GM12878 (cell line): ENCODE measurements at regions of chr3 and their contacts with region 1.

Region 1: GRCh38 chr3:4978204-4978965 is 852 bp upstream of the BHLHE40 start:
- DNase-seq: peak; percentile 78
- ATAC-seq: peak; percentile 52
- H3K4me3 ChIP-seq: peak overlapping the region; percentile 72
- H3K27ac ChIP-seq: peak overlapping the region; percentile 84
- H3K4me1 ChIP-seq: peaks cover 27% of the 10 kb centered on the region
- H3K27me3 ChIP-seq: no peaks in the 10 kb centered on the region
- CTCF ChIP-seq: no peak
- EP300 ChIP-seq: peak; percentile 60 to 80; a peak in 3 of 4 replicates
- POLR2A ChIP-seq: peak; percentile 89
- RAD21 ChIP-seq: 0 out of 2 replicates have a peak, but pooled peaks have one; percentile 5

Region 2: DNA sequence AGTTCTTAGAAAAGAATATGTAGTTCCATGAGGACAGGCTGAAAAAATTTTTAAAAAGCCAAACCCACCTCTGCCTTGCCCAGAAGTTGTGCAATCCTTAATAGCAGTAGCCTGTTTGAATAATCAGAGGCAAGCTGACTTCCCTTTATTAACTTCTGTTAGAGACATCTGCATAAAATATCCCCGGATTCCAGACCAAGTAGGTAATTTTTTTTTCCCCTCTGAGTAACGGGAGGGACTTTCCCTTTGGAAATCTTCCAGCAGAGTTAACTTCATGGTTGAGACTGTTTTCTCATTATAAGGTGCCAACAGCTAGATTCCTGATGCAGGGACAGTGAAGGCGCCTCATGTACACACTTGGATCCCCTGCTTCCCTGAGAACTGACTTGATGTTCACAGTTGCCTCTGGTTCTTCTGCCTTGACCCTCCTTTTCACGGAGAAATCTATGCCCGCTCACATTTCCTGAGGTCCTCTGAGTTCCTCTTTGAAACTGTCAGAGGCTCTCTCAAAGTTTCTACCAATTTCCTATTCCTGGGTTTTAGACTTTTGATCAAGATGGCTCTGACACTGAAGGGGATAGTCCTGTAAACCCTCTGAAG is 226.8 kb before region 1 on chr3:
- CTCF ChIA-PET with region 1: interaction called, 35 read pairs
- POLR2A ChIA-PET with region 1: interaction called, 230 read pairs
- RAD21 ChIA-PET with region 1: interaction called, 342 read pairs
- SMC1A ChIA-PET with region 1: interaction called, 122 read pairs
- in situ Hi-C with region 1: loop called (anchors 5 kb)
- intact Hi-C with region 1: loop called (anchors 1 kb)
- DNase-seq: no peak
- ATAC-seq: peak; percentile 3
- H3K4me3 ChIP-seq: peak overlapping the region; percentile 65
- H3K27ac ChIP-seq: peak overlapping the region; percentile 95
- H3K4me1 ChIP-seq: peaks cover 71% of the 10 kb centered on the region
- H3K27me3 ChIP-seq: no peaks in the 10 kb centered on the region
- CTCF ChIP-seq: no peak
- EP300 ChIP-seq: peak in 1 of 2 experiments; percentile 4; a peak in 1 of 4 replicates
- POLR2A ChIP-seq: no peak
- RAD21 ChIP-seq: no peak

Region 3: DNA sequence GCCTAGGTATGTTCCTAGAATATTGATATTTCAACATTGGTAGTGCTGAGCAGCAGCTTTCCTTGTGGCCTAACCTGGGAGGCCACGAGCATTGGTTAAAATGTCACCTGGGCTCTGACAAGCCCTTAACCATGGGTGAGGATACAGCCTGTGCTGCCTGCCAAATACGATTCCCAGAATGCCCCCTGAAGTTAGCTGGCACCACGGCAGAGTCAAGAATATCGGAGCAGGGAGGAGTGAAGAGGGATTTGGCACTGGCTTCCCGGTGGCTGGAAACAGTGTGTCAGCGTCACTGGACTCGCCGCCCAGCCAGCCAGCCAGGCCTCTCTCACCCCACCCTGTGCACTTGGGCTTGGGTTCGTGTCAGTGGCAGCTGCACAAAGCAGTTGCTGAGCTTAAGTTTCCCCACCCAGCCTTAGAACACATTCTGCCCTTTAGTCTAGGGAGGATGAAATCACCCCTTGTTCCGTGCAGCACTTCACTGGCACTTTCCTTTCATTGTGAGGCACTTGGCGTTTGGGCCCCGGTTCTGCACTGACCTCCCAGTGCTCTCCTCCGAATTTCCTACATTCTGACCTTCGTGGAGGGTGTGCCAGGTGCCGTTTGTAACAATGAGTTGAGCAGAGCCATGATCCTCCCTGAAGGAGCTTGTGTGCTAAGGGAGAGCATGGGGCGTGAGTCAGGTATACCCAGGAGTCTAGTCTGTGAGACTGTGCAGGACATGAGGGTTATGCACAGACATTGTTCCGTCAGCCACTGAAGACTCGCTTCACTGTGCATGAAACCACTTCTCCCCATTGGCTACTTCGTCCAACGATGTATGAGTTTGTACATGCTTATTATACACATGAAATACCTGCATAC is 151.9 kb before region 1 on chr3:
- CTCF ChIA-PET with region 1: interaction called, 35 read pairs
- POLR2A ChIA-PET with region 1: interaction called, 6 read pairs
- RAD21 ChIA-PET with region 1: interaction called, 325 read pairs
- SMC1A ChIA-PET with region 1: interaction called, 129 read pairs
- in situ Hi-C with region 1: no loop called
- intact Hi-C with region 1: loop called (anchors 1 kb)
- DNase-seq: no peak
- ATAC-seq: peak; percentile 9
- H3K4me3 ChIP-seq: no peak overlapping the region
- H3K27ac ChIP-seq: no peak overlapping the region
- H3K4me1 ChIP-seq: peaks cover 21% of the 10 kb centered on the region
- H3K27me3 ChIP-seq: no peaks in the 10 kb centered on the region
- CTCF ChIP-seq: no peak
- EP300 ChIP-seq: no peak
- POLR2A ChIP-seq: peak; percentile 31; the same call in 1 of the 2 replicates
- RAD21 ChIP-seq: no peak

Region 4: GRCh38 chr3:4898454-4899313 is 79.7 kb before region 1 on chr3:
- CTCF ChIA-PET with region 1: interaction called, 15 read pairs
- POLR2A ChIA-PET with region 1: interaction called, 3 read pairs
- RAD21 ChIA-PET with region 1: interaction called, 7 read pairs
- SMC1A ChIA-PET with region 1: interaction called, 12 read pairs
- in situ Hi-C with region 1: no loop called
- intact Hi-C with region 1: loop called (anchors 2 kb)
- DNase-seq: peak; percentile 53
- ATAC-seq: peak; percentile 97
- H3K4me3 ChIP-seq: no peak overlapping the region; the same call in 1 of the 2 replicates
- H3K27ac ChIP-seq: peak overlapping the region; percentile 28
- H3K4me1 ChIP-seq: peaks cover 16% of the 10 kb centered on the region
- H3K27me3 ChIP-seq: no peaks in the 10 kb centered on the region
- CTCF ChIP-seq: no peak
- EP300 ChIP-seq: peak; percentile 69 to 91; a peak in 3 of 4 replicates
- POLR2A ChIP-seq: no peak
- RAD21 ChIP-seq: no peak

Region 5: DNA sequence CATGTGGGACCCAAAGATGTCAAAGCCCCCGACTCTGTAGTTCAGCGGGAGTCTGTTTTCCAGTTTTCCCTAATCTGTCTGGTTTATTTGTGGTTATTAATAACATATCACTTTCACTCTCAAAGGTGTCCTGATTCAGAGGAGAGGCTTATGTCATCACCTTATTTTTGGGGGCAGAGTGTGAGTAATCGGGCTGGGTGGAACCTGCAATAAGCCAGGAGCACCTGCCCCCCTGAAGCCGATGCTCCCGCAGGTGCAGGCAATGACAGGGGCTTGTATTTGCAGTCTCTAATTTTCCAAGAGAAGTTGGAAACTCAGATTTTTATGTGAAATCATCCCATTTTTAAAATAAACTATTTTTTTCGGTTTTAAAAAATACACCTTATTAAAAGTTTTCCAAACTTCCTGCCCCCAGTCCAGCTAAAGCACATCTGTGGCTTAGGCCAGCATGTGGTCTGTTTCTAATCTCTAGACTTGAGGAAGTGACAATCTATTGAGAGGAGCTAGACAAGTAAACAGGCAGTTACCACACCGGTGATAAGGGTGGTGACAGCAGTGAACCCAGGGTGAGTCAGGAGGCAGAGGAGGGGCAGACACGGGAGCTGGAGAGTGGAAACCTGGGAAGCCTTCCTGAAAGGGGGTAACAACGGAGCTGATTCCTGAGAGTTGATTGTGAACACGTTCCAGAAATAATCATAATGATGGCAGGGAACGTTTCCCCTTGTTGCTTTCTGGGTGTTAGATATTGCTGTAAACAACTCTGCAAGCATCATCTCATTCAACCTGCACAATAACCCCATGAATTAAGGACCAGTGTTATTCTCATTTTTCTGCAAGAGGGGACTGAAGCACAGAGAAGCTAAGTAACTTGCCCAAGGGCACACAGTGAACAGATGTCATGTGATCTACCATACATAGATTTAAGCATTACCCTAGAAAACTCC is 38.1 kb after region 1 on chr3:
- CTCF ChIA-PET with region 1: interaction called, 330 read pairs
- POLR2A ChIA-PET with region 1: interaction called, 94 read pairs
- RAD21 ChIA-PET with region 1: interaction called, 421 read pairs
- SMC1A ChIA-PET with region 1: interaction called, 163 read pairs
- in situ Hi-C with region 1: no loop called
- intact Hi-C with region 1: no loop called
- DNase-seq: no peak
- ATAC-seq: peak; percentile 63
- H3K4me3 ChIP-seq: no peak overlapping the region
- H3K27ac ChIP-seq: no peak overlapping the region
- H3K4me1 ChIP-seq: peaks cover 43% of the 10 kb centered on the region
- H3K27me3 ChIP-seq: no peaks in the 10 kb centered on the region
- CTCF ChIP-seq: no peak
- EP300 ChIP-seq: peak; percentile 69 to 76; a peak in 2 of 4 replicates
- POLR2A ChIP-seq: no peak
- RAD21 ChIP-seq: no peak

Region 6: GRCh38 chr3:5194341-5195159 is 216.2 kb after region 1 on chr3:
- CTCF ChIA-PET with region 1: no interaction called
- POLR2A ChIA-PET with region 1: no interaction called
- RAD21 ChIA-PET with region 1: interaction called, 5 read pairs
- SMC1A ChIA-PET with region 1: interaction called, 3 read pairs
- in situ Hi-C with region 1: loop called (anchors 5 kb)
- intact Hi-C with region 1: no loop called
- DNase-seq: no peak
- ATAC-seq: peak; percentile 49
- H3K4me3 ChIP-seq: peak overlapping the region; percentile 39; the same call in 1 of the 2 replicates
- H3K27ac ChIP-seq: peak overlapping the region; percentile 94
- H3K4me1 ChIP-seq: peaks cover 57% of the 10 kb centered on the region
- H3K27me3 ChIP-seq: no peaks in the 10 kb centered on the region
- CTCF ChIP-seq: no peak
- EP300 ChIP-seq: no peak
- POLR2A ChIP-seq: peak; percentile 20; the same call in 1 of the 2 replicates
- RAD21 ChIP-seq: no peak